ENCODE measurements at regions of chr3 and their contacts with region 1.

Region 1: DNA sequence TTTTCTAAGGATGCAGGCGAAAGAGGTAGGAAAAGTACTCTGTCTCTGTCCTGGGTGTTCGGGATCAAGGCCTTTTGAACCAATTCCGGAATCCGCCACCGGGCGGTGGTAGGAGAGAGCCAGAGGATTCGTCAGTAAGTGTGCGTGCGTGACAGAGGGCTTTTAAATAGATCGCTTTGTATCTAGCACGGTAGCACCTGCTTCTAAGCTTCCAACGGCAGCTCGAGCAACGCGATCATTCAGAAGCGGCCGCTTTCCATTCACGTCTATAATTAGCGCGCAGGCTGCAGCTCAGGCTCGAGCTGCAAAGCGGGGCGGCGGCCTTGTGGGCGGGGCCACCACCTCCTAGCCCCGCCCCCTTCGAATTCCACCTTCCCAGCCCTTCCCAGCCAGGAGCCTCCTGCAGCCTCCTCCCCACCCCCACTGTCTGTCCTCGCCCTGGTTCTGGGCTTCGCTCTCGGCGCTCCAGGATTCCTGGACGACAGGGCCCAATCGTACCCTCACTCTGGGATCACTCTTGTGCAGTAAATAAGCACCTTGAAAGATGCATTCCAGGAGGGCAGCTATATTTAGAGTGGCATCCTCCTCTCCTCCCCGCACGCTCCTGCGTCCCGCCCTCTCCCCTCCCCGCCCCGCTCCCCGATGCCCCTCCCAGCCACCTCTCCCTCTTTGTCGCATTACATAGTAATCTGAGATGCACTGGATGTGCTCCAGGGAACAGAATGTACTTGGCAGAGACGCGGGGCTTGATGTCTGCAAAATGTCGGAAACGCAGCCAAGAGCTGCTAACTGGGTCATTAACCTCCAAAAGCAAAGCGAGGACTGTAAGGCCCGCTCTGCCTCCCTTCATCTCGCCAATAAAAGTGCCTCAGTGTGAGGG is 224.1 kb upstream of the TPRG1 start:
- DNase-seq: peak; percentile 94
- ATAC-seq: peak; percentile 90 to 91

Region 2: DNA sequence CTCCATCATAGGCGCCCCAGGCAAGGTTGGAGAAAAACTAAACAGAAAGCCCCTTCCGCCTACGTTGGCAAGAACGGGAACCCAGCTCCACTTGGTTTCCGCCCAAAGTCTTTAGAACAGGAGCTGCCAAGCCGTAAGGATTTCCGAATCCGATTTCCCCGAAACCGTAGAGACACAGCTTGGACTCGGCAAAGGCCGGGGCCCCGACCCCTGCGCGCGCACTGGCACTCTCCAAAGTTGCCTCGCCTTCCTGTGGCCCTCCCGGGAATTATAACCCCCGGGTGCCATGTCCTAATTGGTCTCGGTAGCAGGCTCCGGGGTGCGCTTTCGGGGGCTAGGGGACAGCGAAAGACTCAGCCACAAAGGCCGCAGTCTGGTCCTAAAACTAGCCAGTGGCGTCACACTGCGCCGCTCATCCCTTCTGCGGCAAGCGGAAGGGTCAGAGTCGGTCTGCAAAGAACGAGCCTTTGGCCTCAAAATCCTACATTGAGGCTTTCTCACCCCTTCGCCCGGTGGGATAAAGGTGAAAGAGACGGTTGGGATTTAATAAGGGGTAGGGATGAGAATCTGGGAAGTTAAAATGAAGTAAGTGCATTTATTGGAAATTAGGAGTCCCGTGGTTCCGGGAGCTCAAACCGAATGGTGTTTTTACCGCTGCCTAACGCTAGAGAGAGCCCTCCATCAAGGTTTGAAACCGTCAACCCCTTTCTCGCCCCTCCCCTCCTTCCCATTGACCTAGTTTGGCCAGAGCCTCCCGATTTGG is 1209.1 kb before region 1 on chr3:
- intact Hi-C with region 1: loop called (anchors 2 to 5 kb)
- DNase-seq: peak; percentile 90
- ATAC-seq: peak; percentile 67 to 77

Region 3: DNA sequence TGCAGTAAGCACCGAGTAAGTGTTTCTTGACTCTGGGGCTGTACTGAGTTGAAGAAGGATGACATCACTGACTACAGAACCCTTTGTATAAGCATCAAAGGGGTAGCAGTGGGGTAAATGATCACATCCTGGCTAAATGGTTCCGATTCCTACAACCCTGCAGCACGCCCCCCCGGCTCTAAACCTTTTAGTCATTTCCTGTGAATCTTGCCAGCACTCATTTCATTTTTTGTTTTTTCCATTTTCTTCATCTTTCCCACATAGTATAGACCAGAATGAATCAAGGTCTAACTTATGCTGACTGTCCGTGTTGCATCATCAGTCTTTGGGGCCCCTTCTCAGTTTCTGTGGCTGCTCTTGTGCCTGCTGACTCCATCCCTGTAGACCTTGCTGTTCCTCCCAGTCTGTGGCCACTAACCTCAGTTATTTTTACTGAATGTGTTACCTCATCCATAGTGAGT is 159.0 kb before region 1 on chr3:
- intact Hi-C with region 1: loop called in 1 of 2 experiments (anchors 10 kb)
- DNase-seq: no peak
- ATAC-seq: peak in 1 of 2 donors; percentile 78

Region 4: DNA sequence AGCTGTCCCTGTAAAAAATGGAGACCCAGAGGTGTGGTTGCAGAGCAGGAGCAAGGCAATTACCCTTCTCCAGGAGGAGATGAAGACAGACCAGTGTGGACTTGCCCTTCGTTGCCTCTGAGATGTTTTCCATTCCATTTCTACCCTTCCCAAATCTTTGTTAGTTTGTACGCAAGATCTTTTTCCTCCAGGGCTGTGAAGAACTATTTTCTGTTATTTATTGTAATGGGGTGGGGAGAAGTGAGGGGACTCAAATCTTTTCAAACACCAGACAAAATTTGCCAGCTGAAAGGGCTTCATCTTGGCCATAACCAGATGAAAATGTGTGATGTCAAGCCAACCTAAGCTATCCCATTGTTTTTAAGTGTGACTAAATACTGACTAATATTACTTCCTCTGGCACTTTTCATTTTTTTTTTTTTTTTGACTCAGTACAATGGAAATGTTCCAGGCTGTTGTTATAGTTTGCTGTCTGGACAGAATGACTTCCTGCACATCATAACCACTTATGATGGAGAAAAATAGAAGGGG is 47.2 kb before region 1 on chr3:
- intact Hi-C with region 1: loop called in 1 of 2 experiments (anchors 5 kb)
- DNase-seq: no peak
- ATAC-seq: peak; percentile 68 to 85

Region 5: DNA sequence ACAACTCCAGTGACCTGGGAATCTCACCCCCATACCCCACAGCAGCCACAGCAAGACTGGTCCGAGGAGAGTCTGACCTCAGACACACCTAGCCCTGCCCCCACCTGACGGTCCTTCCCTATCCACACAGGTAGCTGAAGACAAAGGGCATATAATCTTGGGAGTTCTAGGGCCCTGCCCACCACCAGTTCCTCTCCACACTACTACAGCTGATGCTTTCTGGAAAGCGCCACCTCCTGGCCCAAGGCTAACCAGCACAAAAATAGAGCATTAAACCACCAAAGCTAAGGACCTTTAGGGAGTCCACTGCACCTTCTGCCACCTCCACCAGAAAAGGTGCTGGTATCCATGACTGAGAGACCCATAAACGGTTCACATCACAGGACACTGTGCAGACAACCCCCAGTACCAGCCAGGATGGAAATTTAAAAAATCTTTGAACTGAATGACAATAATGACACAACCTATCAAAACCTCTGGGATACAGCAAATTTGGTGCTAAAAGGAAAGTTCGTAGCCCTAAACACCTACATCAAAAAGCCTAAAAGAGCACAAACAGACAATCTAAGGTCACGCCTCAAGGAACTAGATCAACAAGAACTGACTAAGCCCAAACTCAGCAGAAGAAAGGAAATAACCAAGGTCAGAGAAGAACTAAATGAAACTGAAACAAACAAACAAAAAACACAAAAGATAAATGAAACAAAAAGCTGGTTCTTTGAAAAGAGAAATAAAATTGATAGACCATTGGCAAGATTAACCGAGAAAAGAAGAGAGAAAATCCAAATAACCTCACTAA is 102.0 kb after region 1 on chr3:
- intact Hi-C with region 1: no loop called
- DNase-seq: no peak
- ATAC-seq: no peak

Region 6: DNA sequence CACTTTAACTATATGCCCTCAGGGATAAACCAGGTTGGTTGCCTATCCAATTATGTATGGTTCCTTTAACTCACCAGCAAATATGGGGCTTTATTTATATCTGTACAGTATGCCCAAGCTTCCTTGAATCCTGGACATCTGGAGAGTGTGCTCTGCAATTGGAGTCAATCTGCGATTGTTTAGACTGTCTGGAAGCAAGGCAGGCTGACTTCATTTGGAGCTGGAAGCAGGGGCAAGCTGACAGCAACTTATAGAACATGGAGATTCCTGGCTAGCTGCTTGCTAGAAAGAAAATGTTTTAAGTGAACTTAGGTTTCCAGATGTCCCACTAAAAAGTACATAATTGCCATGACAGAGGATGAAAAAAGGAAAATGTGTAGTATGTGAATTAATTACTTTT is 160.4 kb after region 1 on chr3:
- intact Hi-C with region 1: no loop called
- DNase-seq: no peak
- ATAC-seq: no peak

Measured in left cardiac atrium (tissue), 4 donors.